PC-9 (cell line): ENCODE measurements at regions of chr4 and their contacts with region 1.

Region 1: DNA sequence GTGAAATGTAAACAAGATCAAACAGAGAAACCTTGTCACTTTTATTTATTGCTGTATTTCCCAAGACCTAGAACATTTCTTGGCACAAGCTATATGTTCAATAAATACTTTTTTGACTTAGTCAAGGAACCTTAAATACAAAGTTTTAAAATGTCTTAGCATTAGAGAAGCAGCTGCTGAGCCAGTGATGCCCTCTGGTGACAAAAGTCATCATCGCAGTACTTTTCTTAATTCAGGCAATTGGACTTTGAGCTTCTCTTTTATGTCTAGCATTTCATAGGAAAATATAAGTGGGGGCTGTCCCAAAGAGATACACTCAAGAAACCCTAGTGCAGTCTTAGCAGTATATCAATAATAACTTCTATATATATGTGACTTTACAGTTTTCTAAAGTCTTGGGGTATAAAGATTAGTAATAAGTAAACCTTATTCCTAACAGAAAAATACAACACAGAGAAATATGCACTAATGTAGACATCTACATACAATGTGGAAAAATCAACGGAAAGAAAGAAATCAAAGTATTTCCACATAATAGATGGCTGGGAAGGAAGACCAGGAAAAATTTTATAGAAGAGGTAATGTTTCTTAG is 118.4 kb downstream of the DTHD1 start:
- DNase-seq: peak in 1 of 2 experiments; percentile 5
- H3K4me3 ChIP-seq: no peak overlapping the region
- H3K27ac ChIP-seq: no peak overlapping the region
- H3K4me1 ChIP-seq: no peaks in the 10 kb centered on the region
- H3K27me3 ChIP-seq: no peaks in the 10 kb centered on the region
- CTCF ChIP-seq: peak; percentile 71

Region 2: DNA sequence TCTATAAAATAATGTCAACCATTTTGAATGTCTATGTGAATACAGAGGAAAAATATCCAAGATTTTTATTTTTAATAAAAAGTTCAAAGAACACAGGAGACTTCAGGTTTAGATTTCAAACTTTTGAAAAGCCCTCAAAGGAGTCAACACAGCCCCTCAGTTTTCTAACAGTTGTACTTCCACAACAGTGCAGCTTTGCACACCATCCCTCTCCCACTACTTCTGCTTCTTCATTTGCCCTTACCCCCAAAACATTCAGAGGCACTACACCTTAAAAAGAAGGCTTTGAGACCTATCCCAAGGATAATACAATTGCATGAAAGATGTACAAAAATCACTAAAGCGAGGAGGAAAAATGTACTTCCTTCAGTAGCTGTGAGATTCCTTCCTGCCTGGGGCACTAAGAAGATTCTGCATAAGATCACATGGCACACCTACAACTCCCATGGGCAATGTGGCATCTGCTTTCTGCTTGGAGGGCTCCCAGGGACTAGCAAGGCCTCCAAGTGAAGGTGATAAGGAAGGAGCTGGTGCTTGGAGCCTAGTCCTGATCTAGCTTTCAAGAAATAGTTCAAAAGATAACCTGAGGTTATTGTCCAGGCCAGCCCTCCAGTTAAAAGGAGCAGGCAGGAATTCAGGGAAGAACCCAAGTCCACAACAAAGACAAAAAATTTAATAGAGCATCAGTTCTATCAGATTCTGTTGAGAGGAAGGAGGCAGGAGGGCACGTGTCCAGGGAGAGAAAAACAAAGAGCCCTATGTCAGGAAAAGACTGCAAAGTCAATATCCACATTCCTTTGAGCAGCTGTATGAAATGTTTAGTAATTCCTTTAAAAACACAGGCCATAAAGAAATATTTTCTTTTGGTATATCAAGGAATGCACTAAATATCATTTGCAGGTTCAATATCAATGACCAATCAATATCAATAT is 174.6 kb before region 1 on chr4:
- CTCF ChIA-PET with region 1: no interaction called
- POLR2A ChIA-PET with region 1: no interaction called
- intact Hi-C with region 1: no loop called
- DNase-seq: no peak
- H3K4me3 ChIP-seq: no peak overlapping the region
- H3K27ac ChIP-seq: no peak overlapping the region
- H3K4me1 ChIP-seq: peaks cover 24% of the 10 kb centered on the region
- H3K27me3 ChIP-seq: no peaks in the 10 kb centered on the region
- CTCF ChIP-seq: no peak

Region 3: GRCh38 chr4:36351082-36351666 is 48.7 kb before region 1 on chr4:
- CTCF ChIA-PET with region 1: interaction called, 3 read pairs
- POLR2A ChIA-PET with region 1: no interaction called
- intact Hi-C with region 1: loop called (anchors 1 kb)
- DNase-seq: peak; percentile 50 to 52
- H3K4me3 ChIP-seq: no peak overlapping the region
- H3K27ac ChIP-seq: no peak overlapping the region
- H3K4me1 ChIP-seq: no peaks in the 10 kb centered on the region
- H3K27me3 ChIP-seq: no peaks in the 10 kb centered on the region
- CTCF ChIP-seq: peak; percentile 85

Region 4: DNA sequence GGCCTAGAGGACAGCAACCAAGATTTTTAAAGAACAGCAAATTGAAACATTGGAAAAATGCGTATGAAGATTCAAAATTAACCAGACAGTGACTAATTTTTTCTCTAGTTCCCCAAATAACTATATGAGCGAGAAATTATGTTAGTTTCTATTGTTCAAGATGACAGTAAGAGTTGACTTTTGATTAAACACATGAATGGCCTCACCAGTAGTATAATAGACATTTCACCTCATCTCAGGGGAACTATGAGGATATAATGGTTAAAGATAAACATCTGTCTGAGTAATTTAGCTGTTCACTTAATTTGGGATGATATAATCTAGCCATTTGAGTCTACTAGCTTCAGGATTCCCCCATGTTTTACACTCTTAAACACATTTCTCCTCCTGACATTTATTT is 463.7 kb after region 1 on chr4:
- CTCF ChIA-PET with region 1: no interaction called
- POLR2A ChIA-PET with region 1: no interaction called
- intact Hi-C with region 1: no loop called
- DNase-seq: no peak
- H3K4me3 ChIP-seq: no peak overlapping the region
- H3K27ac ChIP-seq: no peak overlapping the region
- H3K4me1 ChIP-seq: no peaks in the 10 kb centered on the region
- H3K27me3 ChIP-seq: no peaks in the 10 kb centered on the region
- CTCF ChIP-seq: no peak